Activated naive CD4-positive, alpha-beta T cell treated with anti-CD3 and anti-CD28 coated beads for 36 hours (primary cell): ENCODE measurements at regions of chr3 and their contacts with region 1.

Region 1: GRCh38 chr3:120052225-120052624 is 42.0 kb downstream of the GSK3B start:
- DNase-seq: no peak
- H3K4me3 Mint-ChIP-seq: no peak overlapping the region
- H3K27ac Mint-ChIP-seq: no peak overlapping the region
- H3K4me1 Mint-ChIP-seq: peaks cover 61% of the 10 kb centered on the region
- H3K27me3 Mint-ChIP-seq: no peaks in the 10 kb centered on the region

Region 2: GRCh38 chr3:120088622-120089021 is 36.4 kb after region 1 on chr3:
- CTCF ChIA-PET with region 1: interaction called, 4 read pairs
- intact Hi-C with region 1: loop called (anchors 1 kb)
- DNase-seq: no peak
- H3K4me3 Mint-ChIP-seq: no peak overlapping the region
- H3K27ac Mint-ChIP-seq: no peak overlapping the region
- H3K4me1 Mint-ChIP-seq: peaks cover 27% of the 10 kb centered on the region
- H3K27me3 Mint-ChIP-seq: no peaks in the 10 kb centered on the region